ENCODE measurements at regions of chr10 and their contacts with region 1.

Region 1: GRCh38 chr10:124802313-124802675 is 675 bp downstream of the ABRAXAS2 start:
- DNase-seq: peak in 2 of 10 donors; percentile 2 to 3
- ATAC-seq: no peak
- H3K4me3 Mint-ChIP-seq: peak overlapping the region; percentile 85 to 94 (median 89)
- H3K27ac Mint-ChIP-seq: peak overlapping the region; percentile 79 to 96 (median 90)
- H3K4me1 Mint-ChIP-seq: peaks cover 6 to 26% (median 15%) of the 10 kb centered on the region in 4 donors
- H3K27me3 Mint-ChIP-seq: peaks cover 0 to 5% (median 0%) of the 10 kb centered on the region in 5 donors

Region 2: GRCh38 chr10:124557648-124558600 is 244.4 kb before region 1 on chr10:
- POLR2A ChIA-PET with region 1: no interaction called
- DNase-seq: peak in 1 of 10 donors; percentile 52
- ATAC-seq: no peak
- H3K4me3 Mint-ChIP-seq: no peak overlapping the region
- H3K27ac Mint-ChIP-seq: no peak overlapping the region
- H3K4me1 Mint-ChIP-seq: peaks cover 0 to 3% (median under 1%) of the 10 kb centered on the region in 4 donors
- H3K27me3 Mint-ChIP-seq: no peaks in the 10 kb centered on the region

Region 3: DNA sequence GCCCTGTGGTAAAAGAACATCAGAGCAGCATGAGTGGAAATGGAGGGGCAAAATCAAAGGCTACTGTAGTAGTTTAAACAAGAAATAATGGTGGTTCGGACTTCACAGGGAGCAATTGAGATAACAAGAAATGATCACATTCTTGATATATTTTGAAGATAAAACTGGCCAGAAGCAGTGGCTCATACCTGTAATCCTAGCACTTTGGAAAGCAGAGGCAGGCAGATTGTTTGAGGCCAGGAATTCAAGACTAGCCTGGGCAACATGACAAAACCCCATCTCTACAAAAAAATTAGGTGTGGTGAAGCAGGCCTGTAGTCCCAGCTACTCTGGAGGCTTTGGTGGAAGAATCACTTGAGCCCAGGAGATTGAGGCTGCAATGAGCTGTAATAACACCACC is 33.5 kb before region 1 on chr10:
- POLR2A ChIA-PET with region 1: no interaction called
- DNase-seq: no peak
- ATAC-seq: no peak
- H3K4me3 Mint-ChIP-seq: no peak overlapping the region
- H3K27ac Mint-ChIP-seq: no peak overlapping the region
- H3K4me1 Mint-ChIP-seq: peaks cover 0 to 2% (median 0%) of the 10 kb centered on the region in 4 donors
- H3K27me3 Mint-ChIP-seq: no peaks in the 10 kb centered on the region

Region 4: GRCh38 chr10:124791378-124792348 is 10.6 kb before region 1 on chr10 and contains the start of gene EEF1AKMT2:
- POLR2A ChIA-PET with region 1: interaction called, 15 read pairs
- DNase-seq: peak; percentile 60 to 88 (median 78)
- ATAC-seq: peak; percentile 96 to 97
- H3K4me3 Mint-ChIP-seq: peak within 1 kb of the TSS; percentile 94 to 100 (median 98)
- H3K27ac Mint-ChIP-seq: peak within 1 kb of the TSS; percentile 90 to 98 (median 96)
- H3K4me1 Mint-ChIP-seq: peaks cover 7 to 25% (median 23%) of the 10 kb centered on the region in 4 donors
- H3K27me3 Mint-ChIP-seq: no peaks in the 10 kb centered on the region
- polyA plus RNA-seq, gene EEF1AKMT2: 21.1 to 29.9 (median 22.6) TPM

Measured in naive thymus-derived CD8-positive, alpha-beta T cell (primary cell).